RWPE1 (cell line): ENCODE measurements at regions of chr10 and their contacts with region 1.

Region 1: DNA sequence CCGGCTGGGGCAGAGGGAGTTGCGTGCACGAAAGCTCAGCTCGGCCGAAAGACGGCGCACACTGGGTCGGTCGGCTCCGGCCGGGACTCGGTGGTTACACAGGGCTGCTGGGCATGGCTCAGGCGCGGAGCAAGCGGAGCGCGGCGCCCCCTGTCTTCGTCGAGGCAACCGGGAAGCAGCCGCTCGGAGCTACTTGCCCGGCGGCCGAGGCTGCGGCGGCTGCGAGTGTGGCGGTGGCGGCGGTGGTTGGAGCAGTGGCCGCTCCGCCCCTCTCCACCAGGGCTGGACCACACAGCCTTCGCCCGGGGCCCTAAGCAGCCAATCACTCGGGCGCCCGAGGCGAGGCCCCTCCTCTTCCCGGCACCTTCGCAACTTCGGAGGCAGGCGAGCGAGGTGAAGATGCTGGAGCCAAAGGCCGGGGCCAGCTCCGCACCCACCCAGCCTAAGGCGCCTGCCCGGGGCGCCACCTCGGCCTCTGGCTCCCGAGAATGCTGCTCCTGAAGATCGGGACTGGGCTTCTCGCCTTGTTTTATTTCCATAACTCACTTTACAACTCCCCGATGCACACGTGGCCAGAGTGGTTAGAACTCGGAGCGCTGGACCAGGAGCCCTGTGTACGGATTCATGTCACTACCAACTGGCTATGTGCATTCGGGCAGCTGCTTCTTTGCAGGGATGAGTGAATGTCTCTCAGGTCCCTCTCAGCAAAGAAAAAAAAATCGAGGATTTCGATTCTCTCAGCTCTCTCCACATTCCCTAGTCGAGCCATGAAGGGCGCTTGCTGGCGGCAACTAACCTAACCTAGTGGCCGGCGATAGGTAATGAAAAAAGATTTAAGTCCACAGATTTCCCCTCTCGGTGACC is at the start of gene TLL2:
- DNase-seq: peak; percentile 93
- H3K27ac ChIP-seq: no peak within 1 kb of the TSS
- CTCF ChIP-seq: peak; percentile 61

Region 2: GRCh38 chr10:96395931-96396877 is 117.7 kb before region 1 on chr10:
- CTCF ChIA-PET with region 1: interaction called, 11 read pairs
- POLR2A ChIA-PET with region 1: no interaction called
- DNase-seq: peak; percentile 91
- H3K27ac ChIP-seq: no peak overlapping the region
- CTCF ChIP-seq: peak; percentile 90

Region 3: DNA sequence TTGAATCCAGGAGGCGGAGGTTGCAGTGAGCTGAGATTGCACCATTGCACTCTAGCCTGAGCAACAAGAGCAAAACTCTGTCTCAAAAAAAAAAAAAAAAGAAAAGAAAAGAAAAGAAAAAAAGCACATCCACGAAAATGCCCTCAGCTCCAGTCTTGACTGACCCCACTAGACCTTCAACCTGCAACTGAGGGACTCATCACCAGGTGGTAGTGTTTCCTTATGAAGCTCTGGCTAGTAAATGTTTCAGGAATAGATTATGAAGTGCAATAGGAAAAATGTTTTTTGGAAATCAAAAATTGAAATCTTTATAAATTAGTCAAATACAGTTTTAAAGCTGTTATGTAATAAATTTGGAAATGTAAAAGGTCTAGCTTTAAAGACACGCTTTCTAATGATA is 22.6 kb before region 1 on chr10:
- CTCF ChIA-PET with region 1: interaction called, 88 read pairs
- POLR2A ChIA-PET with region 1: no interaction called
- DNase-seq: peak; percentile 64
- H3K27ac ChIP-seq: no peak overlapping the region
- CTCF ChIP-seq: peak; percentile 32

Region 4: GRCh38 chr10:96501985-96502384 is 11.9 kb before region 1 on chr10:
- CTCF ChIA-PET with region 1: interaction called, 16 read pairs
- POLR2A ChIA-PET with region 1: no interaction called
- DNase-seq: peak; percentile 87
- H3K27ac ChIP-seq: peak overlapping the region; percentile 28
- CTCF ChIP-seq: no peak

Region 5: GRCh38 chr10:97334370-97335175 is 820.6 kb after region 1 on chr10 and contains the start of gene FRAT2:
- CTCF ChIA-PET with region 1: no interaction called
- POLR2A ChIA-PET with region 1: no interaction called
- DNase-seq: peak; percentile 97
- H3K27ac ChIP-seq: peak within 1 kb of the TSS; percentile 93
- CTCF ChIP-seq: no peak